ENCODE measurements at regions of chr6 and their contacts with region 1.

Region 1: GRCh38 chr6:11496152-11497060 is 41.1 kb upstream of the TMEM170B start:
- DNase-seq: peak; percentile 24 to 90 (median 62)
- ATAC-seq: peak; percentile 93 to 98 (median 94)
- H3K4me3 ChIP-seq: no peak overlapping the region
- H3K4me3 Mint-ChIP-seq: no peak overlapping the region
- H3K27ac ChIP-seq: no peak overlapping the region
- H3K27ac Mint-ChIP-seq: no peak overlapping the region
- H3K4me1 ChIP-seq: no peaks in the 10 kb centered on the region
- H3K4me1 Mint-ChIP-seq: peaks cover 0 to 4% (median 3%) of the 10 kb centered on the region in 3 donors
- H3K27me3 ChIP-seq: no peaks in the 10 kb centered on the region
- H3K27me3 Mint-ChIP-seq: no peaks in the 10 kb centered on the region

Region 2: GRCh38 chr6:11144393-11144851 is 352.0 kb before region 1 on chr6:
- CTCF ChIA-PET with region 1: interaction called, 36 to 39 read pairs
- POLR2A ChIA-PET with region 1: no interaction called
- DNase-seq: peak; percentile 29 to 84 (median 64)
- ATAC-seq: peak; percentile 50 to 77 (median 74)
- H3K4me3 ChIP-seq: no peak overlapping the region
- H3K4me3 Mint-ChIP-seq: no peak overlapping the region
- H3K27ac ChIP-seq: no peak overlapping the region
- H3K27ac Mint-ChIP-seq: no peak overlapping the region
- H3K4me1 ChIP-seq: peaks cover 0 to 3% of the 10 kb centered on the region in 2 experiments
- H3K4me1 Mint-ChIP-seq: peaks cover 0 to 5% (median 2%) of the 10 kb centered on the region in 3 donors
- H3K27me3 ChIP-seq: no peaks in the 10 kb centered on the region
- H3K27me3 Mint-ChIP-seq: no peaks in the 10 kb centered on the region

Region 3: DNA sequence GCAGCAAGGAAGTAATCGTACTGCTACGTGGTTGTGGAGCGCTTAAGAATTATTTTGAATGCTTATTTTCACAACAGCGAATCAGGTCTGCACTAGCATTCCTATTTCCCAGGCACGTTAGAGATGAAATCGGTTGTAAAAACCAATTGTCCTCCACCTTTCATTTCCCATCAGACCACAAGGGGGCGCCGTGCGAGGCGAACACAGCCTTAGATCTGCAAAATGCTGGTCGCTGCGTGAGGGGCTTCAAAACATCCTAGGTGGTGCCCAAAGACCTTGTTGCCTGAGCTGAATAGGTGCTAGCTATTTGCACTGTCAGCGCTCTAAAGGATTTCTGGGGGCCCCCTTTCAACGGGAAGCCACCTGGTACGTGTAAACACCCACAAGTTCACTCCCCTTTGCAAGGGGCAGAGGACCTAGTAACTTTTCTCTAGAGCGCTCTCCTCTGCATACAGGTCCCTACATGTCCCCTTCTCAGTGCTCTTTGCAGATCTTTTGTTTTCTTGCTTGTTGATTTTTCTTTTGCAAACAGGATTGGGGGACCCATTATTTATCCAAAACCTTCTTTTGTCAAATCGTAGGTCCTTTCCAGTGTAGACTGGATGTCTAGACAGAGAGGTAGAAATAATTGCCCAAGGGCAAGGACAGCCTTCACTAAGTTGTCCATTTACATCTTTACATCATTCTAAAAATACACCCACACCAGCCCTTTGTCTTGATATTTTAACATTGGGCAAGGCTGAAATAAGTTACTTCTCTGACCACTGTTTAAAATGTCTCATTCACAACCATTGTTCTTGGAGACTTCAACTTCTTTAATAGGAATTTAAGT is 323.7 kb before region 1 on chr6:
- CTCF ChIA-PET with region 1: interaction called, 38 to 49 read pairs
- POLR2A ChIA-PET with region 1: no interaction called
- DNase-seq: peak; percentile 29 to 85 (median 71)
- ATAC-seq: peak; percentile 48 to 71 (median 59)
- H3K4me3 ChIP-seq: peak overlapping the region; percentile 2 to 58
- H3K4me3 Mint-ChIP-seq: peak overlapping the region; percentile 8 to 22 (median 14)
- H3K27ac ChIP-seq: no peak overlapping the region
- H3K27ac Mint-ChIP-seq: peak overlapping the region in 1 of 2 donors; percentile 21
- H3K4me1 ChIP-seq: peaks cover 5 to 9% of the 10 kb centered on the region in 2 experiments
- H3K4me1 Mint-ChIP-seq: peaks cover 9 to 13% (median 9%) of the 10 kb centered on the region in 3 donors
- H3K27me3 ChIP-seq: no peaks in the 10 kb centered on the region
- H3K27me3 Mint-ChIP-seq: no peaks in the 10 kb centered on the region

Measured in T-cell (primary cell).